Right lobe of liver (tissue), 6 donors: ENCODE measurements at regions of chr10 and their contacts with region 1.

Region 1: DNA sequence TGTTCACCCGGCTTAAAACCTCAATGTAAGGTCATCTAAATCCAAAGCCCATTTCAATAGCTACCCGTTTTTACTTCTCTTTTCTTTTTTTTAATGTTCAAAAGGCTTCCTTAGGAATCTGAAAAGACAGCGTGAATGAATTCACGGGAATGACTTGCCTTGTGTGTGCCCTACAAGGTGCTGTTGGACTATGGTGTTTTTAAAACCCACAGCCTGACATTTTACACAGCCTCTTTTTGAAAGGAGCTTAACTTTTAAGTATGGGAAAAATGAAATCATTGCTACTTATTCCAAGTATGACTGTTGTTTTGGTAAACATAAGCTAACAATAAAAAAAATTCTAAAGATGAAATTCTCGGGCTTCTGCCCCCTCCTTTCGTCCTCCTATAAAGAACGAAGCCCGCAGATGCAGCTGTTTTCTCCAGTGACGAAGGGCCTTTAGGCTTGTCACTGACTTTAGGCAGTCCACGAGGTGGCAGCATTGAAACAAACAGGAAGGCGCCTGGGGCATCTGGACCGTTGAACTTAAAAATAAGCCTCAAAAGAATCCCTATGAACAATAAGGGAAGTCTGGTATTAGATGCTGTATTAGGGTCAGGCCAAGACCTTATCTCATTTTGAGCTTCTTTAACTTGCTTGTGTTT is 141.3 kb downstream of the NRP1 start:
- DNase-seq: peak; percentile 78 to 84 (median 83)
- ATAC-seq: peak; percentile 64 to 82 (median 72)
- H3K4me3 ChIP-seq: no peak overlapping the region
- H3K27ac ChIP-seq: peak overlapping the region; percentile 14 to 83 (median 33)
- H3K4me1 ChIP-seq: peaks cover 0 to 44% (median 20%) of the 10 kb centered on the region in 4 donors
- H3K27me3 ChIP-seq: no peaks in the 10 kb centered on the region
- CTCF ChIP-seq: peak; percentile 71 to 90 (median 82)
- POLR2A ChIP-seq: no peak

Region 2: DNA sequence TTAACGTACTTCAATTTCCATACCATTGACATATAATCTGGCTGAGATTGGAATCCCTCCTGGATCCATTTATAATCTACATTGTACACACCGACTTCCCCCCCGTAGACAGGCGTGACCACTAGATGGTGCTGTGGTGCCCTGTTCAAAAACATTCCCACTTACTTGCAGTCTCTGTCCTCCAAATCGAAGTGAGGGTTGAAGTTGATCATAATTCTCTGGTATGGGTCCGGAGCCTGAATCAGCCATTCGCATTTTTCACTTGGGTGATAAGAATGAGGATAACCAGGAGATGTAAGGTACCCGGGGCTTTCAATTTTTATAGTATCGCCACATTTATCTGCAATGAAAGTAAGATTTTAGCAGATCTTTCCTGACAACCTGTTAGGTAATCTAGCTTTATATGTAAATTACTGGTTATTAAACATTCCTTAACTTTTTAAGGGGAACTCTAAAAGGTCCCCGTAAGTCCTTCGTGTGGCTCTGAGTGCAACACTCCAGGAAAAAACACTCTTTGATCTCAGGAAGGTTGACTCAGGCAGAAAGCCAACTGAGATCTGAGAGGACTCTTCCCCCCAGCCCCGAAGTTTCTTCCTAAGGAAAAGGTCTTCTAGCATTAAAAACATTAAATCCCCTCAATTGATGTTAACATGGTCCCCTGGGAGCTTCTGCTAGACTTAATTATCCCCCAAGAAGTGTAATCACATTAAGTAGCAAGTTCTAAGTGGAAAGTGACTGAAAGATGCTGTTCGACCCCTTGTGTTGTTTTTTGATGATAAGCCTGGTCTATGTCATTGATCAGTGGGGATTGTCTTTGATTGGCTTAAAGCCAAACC is 137.6 kb after region 1 on chr10:
- intact Hi-C with region 1: loop called in 1 of 2 experiments (anchors 10 kb)
- DNase-seq: peak; percentile 78 to 84 (median 84)
- ATAC-seq: peak; percentile 44 to 63 (median 50)
- H3K4me3 ChIP-seq: peak overlapping the region; percentile 68 to 80 (median 74)
- H3K27ac ChIP-seq: peak overlapping the region; percentile 27 to 37 (median 35)
- H3K4me1 ChIP-seq: peaks cover 0 to 36% (median 9%) of the 10 kb centered on the region in 4 donors
- H3K27me3 ChIP-seq: no peaks in the 10 kb centered on the region
- CTCF ChIP-seq: peak; percentile 88 to 98 (median 90)
- POLR2A ChIP-seq: no peak